WTC11 (cell line): ENCODE measurements at regions of chr20 and their contacts with region 1.

Region 1: GRCh38 chr20:58087193-58087858 is 141.1 kb downstream of the ANKRD60 start:
- DNase-seq: peak; percentile 72
- ATAC-seq: peak; percentile 72
- H3K4me3 Mint-ChIP-seq: no peak overlapping the region
- H3K27ac Mint-ChIP-seq: no peak overlapping the region
- H3K4me1 Mint-ChIP-seq: no peaks in the 10 kb centered on the region
- H3K27me3 Mint-ChIP-seq: no peaks in the 10 kb centered on the region
- CTCF ChIP-seq: peak; percentile 91

Region 2: DNA sequence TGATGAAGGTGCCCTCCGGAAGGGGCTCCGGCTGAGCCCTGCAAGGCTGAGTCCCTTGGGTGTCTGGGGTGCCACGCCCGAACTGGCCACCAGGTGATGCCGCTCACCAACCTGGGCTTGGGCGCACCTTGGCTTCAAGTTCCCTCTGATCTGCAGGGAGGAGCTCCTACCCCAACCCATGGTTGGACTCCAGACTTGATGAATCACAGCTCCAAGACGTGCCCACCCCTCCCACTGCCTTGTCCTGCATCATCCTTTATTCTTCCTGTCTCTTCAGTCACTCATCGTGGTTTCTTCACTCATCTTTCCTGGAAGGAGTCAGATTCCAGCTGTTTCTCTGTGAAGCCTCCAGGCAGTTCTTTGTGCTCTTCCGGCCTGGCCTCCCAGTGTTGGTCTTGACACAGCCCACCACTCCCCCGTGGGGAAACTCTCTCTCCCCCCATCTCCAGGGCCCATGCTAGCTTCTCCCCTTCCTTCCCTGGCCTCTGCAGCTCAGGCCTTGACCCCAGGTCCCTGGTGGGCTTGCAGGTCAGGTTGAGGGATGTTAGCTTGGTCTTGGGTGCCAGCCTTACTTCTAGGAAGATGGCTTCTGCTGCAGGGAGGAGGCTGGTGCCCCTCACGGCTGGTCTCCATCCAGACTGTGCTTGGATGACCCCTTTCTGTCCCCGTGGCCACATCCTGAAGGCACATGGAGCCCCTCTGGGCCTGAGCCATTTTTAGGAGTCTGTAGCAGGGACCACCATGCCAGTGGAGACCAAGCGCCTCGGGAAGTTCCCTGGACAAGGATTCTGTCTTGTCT is 464.5 kb before region 1 on chr20:
- CTCF ChIA-PET with region 1: interaction called, 16 read pairs
- POLR2A ChIA-PET with region 1: no interaction called
- DNase-seq: peak; percentile 85
- ATAC-seq: peak; percentile 96
- H3K4me3 Mint-ChIP-seq: no peak overlapping the region
- H3K27ac Mint-ChIP-seq: no peak overlapping the region
- H3K4me1 Mint-ChIP-seq: peaks cover 9% of the 10 kb centered on the region
- H3K27me3 Mint-ChIP-seq: no peaks in the 10 kb centered on the region; the same call in 1 of the 2 replicates
- CTCF ChIP-seq: peak; percentile 93

Region 3: DNA sequence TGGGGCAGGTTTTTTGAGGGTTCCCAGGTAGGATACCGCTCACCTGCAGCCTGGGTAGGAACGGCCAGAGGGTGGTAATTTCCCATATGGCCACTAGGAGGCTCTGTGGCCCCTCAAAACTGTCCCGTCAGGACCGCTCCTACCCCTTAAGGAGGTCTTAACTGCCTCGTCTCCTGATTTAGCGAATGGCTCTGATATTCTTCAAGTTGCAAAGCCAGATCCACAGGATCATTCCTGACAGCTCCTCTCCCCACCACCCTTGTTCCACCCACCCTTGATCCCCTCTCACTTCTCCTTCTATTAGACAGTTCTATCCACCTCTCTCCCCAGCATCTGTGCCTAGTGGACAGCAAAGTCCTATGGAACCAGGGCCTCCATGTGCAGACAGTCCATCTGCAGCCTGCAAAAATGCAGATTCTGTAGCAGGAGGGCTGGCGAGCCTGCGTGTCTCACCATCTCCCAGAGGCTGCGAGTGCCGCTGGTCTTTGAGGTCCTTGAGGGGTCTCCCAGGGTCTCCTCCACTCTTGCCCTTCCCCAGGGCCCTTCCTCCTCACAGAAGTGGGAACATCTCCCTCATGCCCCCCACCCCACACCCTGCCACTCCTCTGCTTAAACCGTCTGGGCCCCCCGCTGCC is 432.8 kb before region 1 on chr20:
- CTCF ChIA-PET with region 1: interaction called, 11 read pairs
- POLR2A ChIA-PET with region 1: no interaction called
- DNase-seq: peak; percentile 76
- ATAC-seq: peak; percentile 84
- H3K4me3 Mint-ChIP-seq: no peak overlapping the region
- H3K27ac Mint-ChIP-seq: peak overlapping the region; percentile 48; the same call in 1 of the 2 replicates
- H3K4me1 Mint-ChIP-seq: peaks cover 24% of the 10 kb centered on the region
- H3K27me3 Mint-ChIP-seq: no peaks in the 10 kb centered on the region
- CTCF ChIP-seq: peak; percentile 89

Region 4: GRCh38 chr20:58048169-58048568 is 39.2 kb before region 1 on chr20:
- CTCF ChIA-PET with region 1: interaction called, 11 read pairs
- POLR2A ChIA-PET with region 1: no interaction called
- DNase-seq: peak; percentile 44
- ATAC-seq: no peak
- H3K4me3 Mint-ChIP-seq: no peak overlapping the region
- H3K27ac Mint-ChIP-seq: no peak overlapping the region
- H3K4me1 Mint-ChIP-seq: peaks cover 20% of the 10 kb centered on the region
- H3K27me3 Mint-ChIP-seq: no peaks in the 10 kb centered on the region; the same call in 1 of the 2 replicates
- CTCF ChIP-seq: no peak

Region 5: GRCh38 chr20:58179432-58180099 is 92.2 kb after region 1 on chr20:
- CTCF ChIA-PET with region 1: interaction called, 20 read pairs
- POLR2A ChIA-PET with region 1: no interaction called
- DNase-seq: peak; percentile 73
- ATAC-seq: peak; percentile 82
- H3K4me3 Mint-ChIP-seq: peak overlapping the region; percentile 53
- H3K27ac Mint-ChIP-seq: no peak overlapping the region
- H3K4me1 Mint-ChIP-seq: peaks cover 15% of the 10 kb centered on the region
- H3K27me3 Mint-ChIP-seq: peaks cover 28% of the 10 kb centered on the region
- CTCF ChIP-seq: peak; percentile 99

Region 6: DNA sequence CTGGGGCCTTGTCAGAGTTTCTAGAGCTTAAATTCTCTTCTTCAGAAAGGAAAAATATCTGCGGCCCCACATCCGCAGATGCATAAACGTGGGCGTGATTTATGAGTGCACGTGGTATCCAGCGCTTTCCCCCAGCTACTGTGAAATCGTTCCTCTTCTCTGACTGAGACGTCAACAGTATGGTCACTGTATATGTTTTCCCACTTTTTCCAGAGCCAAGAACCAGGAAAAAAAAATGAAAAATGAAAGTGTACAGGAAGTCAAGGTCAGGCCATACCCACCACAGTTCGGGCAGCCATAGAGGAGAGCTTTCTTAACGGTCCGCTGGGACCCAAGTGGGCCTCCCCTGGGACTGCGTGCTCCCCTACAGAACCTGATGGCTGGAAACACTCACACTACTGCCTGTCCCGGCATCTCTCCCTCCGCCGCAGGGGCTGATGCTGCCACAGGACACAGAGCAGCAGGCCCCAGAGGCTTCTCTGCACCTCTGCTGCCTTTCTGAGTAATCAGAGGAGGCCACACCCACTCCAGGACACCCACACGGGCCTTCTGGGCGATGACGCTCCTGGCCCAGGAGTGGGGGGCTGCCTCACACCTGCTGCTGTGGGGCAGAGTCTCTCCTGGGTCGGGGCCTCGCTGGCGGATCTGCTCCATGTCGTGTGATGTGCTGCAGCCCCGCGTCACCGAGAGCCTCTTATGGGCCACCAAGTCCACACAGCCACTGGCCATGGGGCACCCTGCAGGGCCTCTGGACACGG is 547.4 kb after region 1 on chr20:
- CTCF ChIA-PET with region 1: no interaction called
- POLR2A ChIA-PET with region 1: no interaction called
- DNase-seq: no peak
- ATAC-seq: no peak
- H3K4me3 Mint-ChIP-seq: no peak overlapping the region
- H3K27ac Mint-ChIP-seq: no peak overlapping the region
- H3K4me1 Mint-ChIP-seq: peaks cover 4% of the 10 kb centered on the region
- H3K27me3 Mint-ChIP-seq: peaks cover 4% of the 10 kb centered on the region
- CTCF ChIP-seq: no peak